AG04450 (cell line): ENCODE measurements at regions of chr3 and their contacts with region 1.

Region 1: DNA sequence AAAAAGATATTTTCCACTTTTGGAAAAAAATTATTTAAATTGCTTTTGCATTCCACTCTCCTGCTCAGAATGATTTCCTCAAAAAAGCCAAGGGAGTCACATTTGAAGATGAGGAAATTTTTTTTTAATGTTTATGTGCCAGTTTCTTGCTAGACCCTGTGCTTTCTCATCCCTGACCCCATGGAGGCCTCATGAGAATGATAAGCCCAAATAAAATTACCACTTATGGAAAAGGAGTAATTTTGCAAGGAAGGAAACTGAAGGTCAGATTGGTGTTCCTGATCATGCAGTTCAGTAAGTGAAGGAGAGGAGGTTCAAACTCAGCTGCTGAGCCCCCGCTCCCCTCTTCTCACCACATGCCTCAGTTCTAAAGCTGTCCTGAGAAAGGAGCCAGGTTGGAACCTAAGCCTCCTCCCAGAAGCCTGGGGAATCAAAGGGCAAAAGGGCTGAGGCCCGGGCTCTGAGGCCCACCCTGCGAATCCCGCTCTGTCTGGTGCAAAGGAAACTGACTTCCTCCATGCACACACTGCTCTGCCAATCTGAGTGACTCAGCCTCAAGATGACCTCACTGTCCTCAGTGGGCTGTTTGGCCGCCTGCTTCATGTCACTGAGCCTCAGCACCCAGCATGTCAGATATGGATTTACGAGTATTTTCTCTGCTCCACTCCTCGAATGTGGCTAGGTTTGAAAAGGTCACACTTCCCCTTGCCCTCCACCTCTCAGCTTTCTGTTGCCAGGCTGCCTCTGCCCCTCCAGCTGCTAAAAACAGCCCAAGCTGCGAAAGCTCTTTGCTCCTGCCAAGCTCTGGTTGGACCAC is 56.9 kb upstream of the FLNB start:
- DNase-seq: peak; percentile 46
- H3K4me3 ChIP-seq: no peak overlapping the region
- H3K27ac ChIP-seq: peak overlapping the region; percentile 98
- H3K27me3 ChIP-seq: no peaks in the 10 kb centered on the region
- CTCF ChIP-seq: no peak

Region 2: GRCh38 chr3:57961828-57962447 is 10.7 kb after region 1 on chr3:
- CTCF ChIA-PET with region 1: interaction called, 14 read pairs
- POLR2A ChIA-PET with region 1: interaction called, 3 read pairs
- DNase-seq: no peak
- H3K4me3 ChIP-seq: no peak overlapping the region
- H3K27ac ChIP-seq: peak overlapping the region; percentile 2
- H3K27me3 ChIP-seq: no peaks in the 10 kb centered on the region
- CTCF ChIP-seq: peak; percentile 48